SK-N-SH (cell line): ENCODE measurements at regions of chr5 and their contacts with region 1.

Region 1: DNA sequence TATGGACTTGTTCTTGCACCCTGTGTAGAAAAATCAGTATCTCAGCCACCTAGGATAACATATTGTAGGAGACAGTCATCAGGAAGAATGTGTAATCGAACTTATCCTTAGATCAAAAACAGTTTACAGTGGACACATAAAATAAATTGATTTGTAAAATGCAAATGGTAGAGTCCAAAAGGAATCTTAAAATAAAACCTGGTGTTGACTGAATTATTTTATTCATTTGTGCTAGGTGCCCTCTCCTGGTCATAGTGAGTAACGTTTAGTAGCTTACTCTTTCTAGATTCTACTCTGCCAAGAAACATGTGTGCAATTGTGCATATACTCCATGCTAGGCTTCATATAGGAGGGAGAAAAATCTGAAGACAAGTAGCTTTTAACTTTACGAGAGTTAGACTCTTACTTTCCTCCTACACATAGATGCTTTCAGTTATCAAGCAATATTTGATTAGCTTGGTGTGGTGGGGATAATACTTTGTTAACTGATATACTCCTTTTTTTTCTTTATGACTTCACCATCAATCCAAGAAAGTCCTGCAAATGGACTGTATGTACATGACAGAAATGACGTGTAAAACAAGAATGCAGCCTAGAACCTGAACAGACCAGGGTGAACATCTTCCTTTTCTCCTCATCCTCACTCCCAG is 23.7 kb upstream of the LOX start:
- DNase-seq: peak; percentile 23
- H3K4me3 ChIP-seq: peak overlapping the region in 1 of 2 experiments; percentile 8; a peak in 1 of 4 replicates
- H3K27ac ChIP-seq: no peak overlapping the region
- H3K4me1 ChIP-seq: peaks cover 0 to 6% of the 10 kb centered on the region in 2 experiments; a peak in 1 of 4 replicates
- H3K27me3 ChIP-seq: no peaks in the 10 kb centered on the region
- CTCF ChIP-seq: peak; percentile 77
- EP300 ChIP-seq: no peak
- RAD21 ChIP-seq: peak; percentile 81

Region 2: GRCh38 chr5:121915765-121916164 is 186.0 kb before region 1 on chr5:
- CTCF ChIA-PET with region 1: no interaction called
- POLR2A ChIA-PET with region 1: no interaction called
- DNase-seq: no peak
- H3K4me3 ChIP-seq: no peak overlapping the region
- H3K27ac ChIP-seq: no peak overlapping the region
- H3K4me1 ChIP-seq: no peaks in the 10 kb centered on the region; a peak in 1 of 4 replicates
- H3K27me3 ChIP-seq: no peaks in the 10 kb centered on the region
- CTCF ChIP-seq: no peak
- EP300 ChIP-seq: no peak
- RAD21 ChIP-seq: no peak

Region 3: GRCh38 chr5:121968910-121969607 is 132.7 kb before region 1 on chr5:
- CTCF ChIA-PET with region 1: interaction called, 24 read pairs
- POLR2A ChIA-PET with region 1: no interaction called
- DNase-seq: no peak
- H3K4me3 ChIP-seq: peak overlapping the region in 1 of 2 experiments; percentile 46; a peak in 3 of 4 replicates
- H3K27ac ChIP-seq: peak overlapping the region; percentile 39 to 99; a peak in 3 of 4 replicates
- H3K4me1 ChIP-seq: peaks cover 0 to 32% of the 10 kb centered on the region in 2 experiments; a peak in 3 of 4 replicates
- H3K27me3 ChIP-seq: no peaks in the 10 kb centered on the region
- CTCF ChIP-seq: no peak
- EP300 ChIP-seq: peak in 1 of 2 experiments; percentile 94; a peak in 3 of 4 replicates
- RAD21 ChIP-seq: no peak; the same call in 1 of the 2 replicates